Dorsolateral prefrontal cortex (tissue), 120 donors: ENCODE measurements at regions of chr15 and their contacts with region 1.

Region 1: DNA sequence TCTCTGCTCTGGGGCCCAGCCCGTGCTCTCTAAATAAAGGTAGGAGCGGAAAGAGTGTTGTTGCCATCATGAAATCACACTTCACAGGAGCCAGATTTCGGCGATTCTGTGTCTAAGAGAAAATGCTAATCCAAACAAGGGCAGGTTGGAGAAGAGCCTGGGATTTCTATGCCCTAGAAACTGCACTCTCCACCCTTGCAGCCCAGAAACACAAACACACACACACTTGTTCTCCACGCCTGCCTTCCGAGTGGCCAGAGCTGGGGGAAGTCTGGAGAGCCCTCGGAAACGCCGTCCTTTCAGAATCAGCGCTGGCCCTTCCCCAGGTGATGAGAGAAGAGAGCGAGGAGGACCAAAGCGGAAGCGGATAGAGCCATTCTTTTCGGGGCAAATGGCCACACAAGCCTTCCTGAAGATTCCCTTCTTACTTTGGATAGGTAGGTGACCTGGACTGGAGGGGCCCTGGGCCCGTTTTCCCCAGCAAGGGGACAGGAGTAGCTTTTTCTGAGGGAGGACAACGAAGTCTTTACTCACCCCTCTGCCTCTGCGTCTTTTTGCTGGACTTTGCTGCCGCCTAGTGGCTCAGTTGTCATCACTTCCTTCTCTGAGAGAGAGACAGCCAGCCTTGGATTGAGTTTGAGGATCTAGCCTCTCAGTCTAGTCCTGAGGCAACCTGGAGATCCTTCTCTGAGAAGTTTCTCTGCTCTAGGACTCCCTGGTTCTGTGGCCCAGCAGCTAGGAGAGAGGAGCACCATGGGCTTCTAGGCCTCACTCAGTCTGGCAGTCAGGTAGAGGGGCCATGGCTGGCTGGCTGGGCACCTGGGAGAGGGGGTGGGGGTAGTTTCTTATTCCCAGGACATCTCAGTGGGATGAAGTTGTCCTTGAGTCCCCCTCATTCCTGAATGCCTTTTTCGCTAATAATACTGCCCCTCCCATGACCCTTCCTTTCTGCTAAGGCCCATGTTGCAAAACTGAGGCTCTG is 37.7 kb downstream of the SENP8 start:
- DNase-seq: peak; percentile 78 to 92 (median 89)
- H3K4me3 ChIP-seq: peak overlapping the region; percentile 29 to 79 (median 63)
- H3K27ac ChIP-seq: peak overlapping the region in 55 of 59 donors; percentile 22 to 89 (median 74)
- H3K27me3 ChIP-seq: no peaks in the 10 kb centered on the region
- CTCF ChIP-seq: peak; percentile 65 to 95 (median 90)

Region 2: GRCh38 chr15:71448688-71449114 is 707.2 kb before region 1 on chr15:
- intact Hi-C with region 1: loop called in 1 of 2 experiments (anchors 10 kb)
- DNase-seq: peak in 1 of 10 donors; percentile 53
- H3K4me3 ChIP-seq: no peak overlapping the region
- H3K27ac ChIP-seq: peak overlapping the region in 12 of 59 donors; percentile 1 to 46 (median 20)
- H3K27me3 ChIP-seq: no peaks in the 10 kb centered on the region
- CTCF ChIP-seq: peak; percentile 67 to 96 (median 88)

Region 3: GRCh38 chr15:71743861-71744382 is 412.0 kb before region 1 on chr15:
- intact Hi-C with region 1: loop called (anchors 2 to 10 kb)
- DNase-seq: peak in 2 of 10 donors; percentile 24 to 41
- H3K4me3 ChIP-seq: no peak overlapping the region
- H3K27ac ChIP-seq: no peak overlapping the region
- H3K27me3 ChIP-seq: no peaks in the 10 kb centered on the region
- CTCF ChIP-seq: peak; percentile 72 to 97 (median 82)

Region 4: GRCh38 chr15:71780115-71780976 is 375.6 kb before region 1 on chr15:
- intact Hi-C with region 1: loop called (anchors 1 to 10 kb)
- DNase-seq: peak in 1 of 10 donors; percentile 23
- H3K4me3 ChIP-seq: no peak overlapping the region
- H3K27ac ChIP-seq: peak overlapping the region in 16 of 59 donors; percentile 2 to 61 (median 30)
- H3K27me3 ChIP-seq: peaks cover 0 to 4% (median 0%) of the 10 kb centered on the region in 45 donors
- CTCF ChIP-seq: peak; percentile 58 to 86 (median 74)

Region 5: GRCh38 chr15:72117486-72118399 is 38.2 kb before region 1 on chr15 and contains the start of gene MYO9A:
- intact Hi-C with region 1: loop called in 1 of 2 experiments (anchors 5 kb)
- DNase-seq: peak; percentile 91 to 97 (median 96)
- H3K4me3 ChIP-seq: peak within 1 kb of the TSS; percentile 66 to 100 (median 94)
- H3K27ac ChIP-seq: peak within 1 kb of the TSS; percentile 77 to 98 (median 94)
- H3K27me3 ChIP-seq: no peaks in the 10 kb centered on the region
- CTCF ChIP-seq: peak in 43 of 56 donors; percentile 3 to 72 (median 35)
- total RNA-seq, gene MYO9A: 65.1 to 135 (median 98.1) TPM